ENCODE measurements at regions of chr10 and their contacts with region 1.

Region 1: DNA sequence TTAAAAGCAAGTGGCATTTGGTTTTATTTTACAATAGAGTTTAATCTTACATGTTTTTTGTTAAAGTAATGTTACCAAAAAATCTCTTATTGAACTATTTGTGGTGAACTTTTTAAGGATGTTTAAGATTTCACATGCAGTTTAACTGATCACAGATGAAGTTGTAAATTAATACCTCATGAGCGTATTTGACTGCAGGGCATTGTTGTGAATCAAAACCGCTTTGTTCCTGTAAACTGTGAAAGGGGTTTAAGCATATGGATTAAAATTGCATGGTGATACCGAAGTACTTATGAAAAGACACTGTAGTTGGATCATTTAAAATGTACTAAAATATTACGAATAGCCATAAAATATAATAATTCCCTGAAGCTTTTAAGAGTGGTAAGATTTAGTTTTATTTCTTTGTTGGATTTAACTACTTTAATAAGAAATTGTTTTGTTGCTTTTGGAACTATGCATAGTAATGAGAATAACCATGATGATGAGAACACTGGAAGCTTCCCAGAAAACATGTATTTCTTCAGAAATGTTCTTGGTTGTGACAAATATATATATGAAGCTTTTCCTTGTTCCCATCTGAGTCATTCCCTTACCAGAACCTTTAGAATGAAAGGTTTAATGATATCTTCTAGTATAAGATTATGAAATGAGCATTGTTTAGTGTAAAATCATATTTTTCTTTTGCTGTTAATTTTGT is 131.3 kb downstream of the ADK start:
- DNase-seq: no peak
- ATAC-seq: no peak
- H3K4me3 ChIP-seq: no peak overlapping the region
- H3K27ac ChIP-seq: no peak overlapping the region
- H3K4me1 ChIP-seq: no peaks in the 10 kb centered on the region
- H3K27me3 ChIP-seq: no peaks in the 10 kb centered on the region
- CTCF ChIP-seq: no peak
- POLR2A ChIP-seq: no peak

Region 2: DNA sequence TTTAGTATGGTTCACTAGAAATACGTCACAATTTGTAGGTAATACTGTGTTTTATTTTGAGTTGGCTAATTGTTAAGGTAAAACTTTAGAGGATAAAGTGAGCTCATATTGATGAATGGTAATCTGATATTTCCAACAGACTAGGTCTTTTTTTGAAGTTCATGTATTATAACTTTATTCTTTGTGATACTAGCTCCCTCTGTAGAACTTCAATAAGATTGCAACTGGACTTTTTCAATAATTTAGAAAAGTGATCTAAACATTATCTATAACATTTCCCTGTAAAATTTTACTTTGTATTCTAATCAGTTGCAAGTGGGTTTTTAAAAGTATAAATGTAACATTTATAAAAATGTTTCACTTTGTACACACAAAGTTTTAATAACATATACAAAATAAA is 47.7 kb before region 1 on chr10:
- intact Hi-C with region 1: loop called in 1 of 10 experiments (anchors 2 kb)
- DNase-seq: no peak
- ATAC-seq: no peak
- H3K4me3 ChIP-seq: no peak overlapping the region
- H3K27ac ChIP-seq: no peak overlapping the region
- H3K4me1 ChIP-seq: peaks cover 0 to 9% (median 0%) of the 10 kb centered on the region in 12 donors
- H3K27me3 ChIP-seq: no peaks in the 10 kb centered on the region
- CTCF ChIP-seq: peak in 10 of 12 donors; percentile 12 to 56 (median 44)
- POLR2A ChIP-seq: no peak

Measured in heart left ventricle (tissue), 16 donors.